ENCODE measurements at regions of chr11 and their contacts with region 1.

Region 1: GRCh38 chr11:44621140-44621681 is 55.7 kb downstream of the CD82 start:
- DNase-seq: peak; percentile 73 to 91 (median 80)
- H3K4me3 ChIP-seq: peak overlapping the region in 25 of 59 donors; percentile 5 to 46 (median 26)
- H3K27ac ChIP-seq: peak overlapping the region in 17 of 59 donors; percentile 0 to 69 (median 24)
- H3K27me3 ChIP-seq: no peaks in the 10 kb centered on the region
- CTCF ChIP-seq: peak; percentile 91 to 100 (median 98)

Region 2: DNA sequence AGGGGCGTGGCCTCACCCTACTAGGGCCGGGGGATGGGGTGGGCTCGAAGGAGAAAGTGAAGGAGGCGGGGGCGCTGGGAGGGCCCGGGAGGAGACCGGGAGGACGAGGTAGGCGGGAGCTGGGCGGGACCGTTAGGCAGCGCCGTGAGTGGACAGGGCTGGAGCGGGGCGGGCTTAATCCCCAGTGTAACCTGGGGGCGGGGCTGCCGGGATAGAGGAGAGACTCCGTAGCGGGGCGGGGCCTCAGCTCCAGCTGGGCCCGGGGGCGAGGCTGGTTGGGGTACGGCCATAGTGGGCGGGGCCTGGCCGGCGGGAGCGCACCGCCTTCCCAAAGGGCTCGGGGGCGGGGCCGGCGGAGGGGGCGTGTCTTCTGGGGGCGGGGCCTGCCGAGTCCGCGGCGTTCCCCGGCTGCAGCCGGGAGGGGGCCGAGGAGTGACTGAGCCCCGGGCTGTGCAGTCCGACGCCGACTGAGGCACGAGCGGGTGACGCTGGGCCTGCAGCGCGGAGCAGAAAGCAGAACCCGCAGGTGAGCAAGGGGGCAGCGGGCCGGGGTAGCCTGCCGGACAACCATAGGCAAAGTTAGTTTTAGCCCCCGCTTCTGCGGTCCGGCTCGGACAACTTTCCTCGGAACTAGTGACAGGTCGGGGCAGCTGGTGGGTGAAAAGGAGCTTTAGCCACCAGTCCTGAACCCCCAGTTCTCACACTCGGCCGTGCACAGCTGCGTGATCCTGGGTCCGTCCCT is 55.8 kb before region 1 on chr11 and contains the start of gene CD82:
- intact Hi-C with region 1: loop called in 1 of 2 experiments (anchors 2 kb)
- DNase-seq: peak; percentile 93 to 100 (median 99)
- H3K4me3 ChIP-seq: peak within 1 kb of the TSS; percentile 47 to 93 (median 77)
- H3K27ac ChIP-seq: peak within 1 kb of the TSS; percentile 72 to 99 (median 93)
- H3K27me3 ChIP-seq: no peaks in the 10 kb centered on the region
- CTCF ChIP-seq: peak in 36 of 56 donors; percentile 3 to 56 (median 38)
- total RNA-seq, gene CD82: 22.6 to 179 (median 59.4) TPM

Region 3: DNA sequence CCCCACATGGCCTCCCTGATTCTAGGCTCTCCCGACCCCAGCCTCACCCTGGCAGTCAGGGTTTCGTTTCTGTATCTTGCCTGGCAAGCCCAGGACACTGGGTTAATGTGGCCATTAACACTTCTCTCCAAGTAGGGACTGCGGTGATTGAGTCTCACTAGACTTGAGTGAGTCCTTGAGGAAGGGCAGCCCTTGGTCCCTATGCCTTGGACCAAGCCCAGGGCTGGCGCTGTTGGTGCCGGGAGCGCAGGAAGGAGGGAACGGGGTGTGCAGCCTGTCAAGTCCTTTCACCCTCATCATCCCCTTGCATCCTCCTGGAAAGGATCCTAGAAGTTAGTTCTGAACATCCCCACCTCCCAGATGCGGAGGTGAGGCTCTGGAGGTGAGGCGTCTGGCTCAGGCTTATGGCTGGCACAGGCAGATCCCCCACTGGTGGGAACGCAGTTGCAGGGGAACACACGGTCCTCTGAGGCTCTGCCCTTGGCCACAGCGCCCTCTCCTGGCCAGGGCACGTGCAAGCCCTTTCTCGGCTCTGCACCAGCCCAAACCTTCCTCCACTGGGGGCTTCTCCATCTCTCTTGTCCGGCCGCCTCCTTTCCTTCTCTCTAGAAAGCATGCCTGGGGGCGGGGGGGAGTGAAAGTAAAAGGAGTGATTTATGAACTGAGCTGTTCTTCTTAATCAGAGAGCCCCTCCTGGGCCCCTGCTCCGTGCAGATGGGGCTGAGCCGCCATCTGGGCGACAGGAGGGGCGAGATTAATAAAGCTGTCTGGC is 272.8 kb after region 1 on chr11:
- intact Hi-C with region 1: loop called (anchors 1 to 5 kb)
- DNase-seq: peak; percentile 51 to 82 (median 60)
- H3K4me3 ChIP-seq: peak overlapping the region in 32 of 59 donors; percentile 1 to 52 (median 25)
- H3K27ac ChIP-seq: peak overlapping the region in 16 of 59 donors; percentile 8 to 90 (median 40)
- H3K27me3 ChIP-seq: peaks cover 0 to 4% (median 0%) of the 10 kb centered on the region in 45 donors
- CTCF ChIP-seq: peak; percentile 28 to 92 (median 81)

Region 4: GRCh38 chr11:44911029-44911814 is 290.0 kb after region 1 on chr11:
- intact Hi-C with region 1: loop called (anchors 1 to 2 kb)
- DNase-seq: peak; percentile 50 to 97 (median 82)
- H3K4me3 ChIP-seq: peak overlapping the region in 27 of 59 donors; percentile 3 to 51 (median 27)
- H3K27ac ChIP-seq: peak overlapping the region in 4 of 59 donors; percentile 33 to 66 (median 52)
- H3K27me3 ChIP-seq: no peaks in the 10 kb centered on the region
- CTCF ChIP-seq: peak; percentile 86 to 98 (median 94)